PC-9 (cell line): ENCODE measurements at regions of chr1 and their contacts with region 1.

Region 1: DNA sequence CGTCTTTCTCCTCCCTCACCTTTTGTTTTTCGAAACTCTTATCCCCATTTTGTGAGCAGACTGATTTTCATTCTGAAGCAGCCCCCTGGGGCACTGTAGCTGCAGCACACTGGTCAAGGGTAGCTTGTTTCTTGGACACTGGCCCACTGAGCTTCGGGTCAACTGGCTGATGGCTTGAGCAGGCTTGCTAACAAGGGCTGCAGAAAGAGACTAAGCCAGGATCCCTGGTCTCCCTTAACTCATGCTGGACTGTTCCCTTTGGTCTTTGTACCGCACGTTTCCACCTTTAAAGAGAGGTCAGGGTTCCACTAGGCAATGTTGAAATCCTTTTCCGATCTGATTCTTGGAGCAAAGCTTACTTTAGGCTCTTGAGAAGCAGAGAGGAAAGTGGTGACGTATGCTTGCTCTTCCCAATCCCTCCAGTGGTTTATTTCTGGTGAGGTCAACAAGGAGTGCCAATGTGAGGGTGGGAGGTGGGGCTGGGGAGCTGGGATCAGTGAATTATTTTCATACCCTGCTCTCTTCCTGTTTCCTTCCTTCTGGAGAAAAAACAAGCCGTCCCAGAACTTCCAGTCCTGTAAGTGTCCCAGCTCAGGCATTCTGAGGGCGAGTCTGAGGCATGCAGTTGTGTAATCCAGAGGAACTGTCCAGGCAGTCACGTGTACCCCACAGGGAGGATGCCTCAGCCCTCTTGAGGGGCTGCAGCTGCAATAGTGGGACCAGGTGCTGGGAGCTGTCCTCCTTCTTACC is 7.6 kb downstream of the CYP4B1 start:
- DNase-seq: peak; percentile 69 to 82
- H3K4me3 ChIP-seq: no peak overlapping the region
- H3K27ac ChIP-seq: peak overlapping the region; percentile 73
- H3K4me1 ChIP-seq: peaks cover 51% of the 10 kb centered on the region
- H3K27me3 ChIP-seq: no peaks in the 10 kb centered on the region
- CTCF ChIP-seq: no peak

Region 2: GRCh38 chr1:46595127-46595526 is 211.3 kb before region 1 on chr1:
- CTCF ChIA-PET with region 1: no interaction called
- POLR2A ChIA-PET with region 1: no interaction called
- intact Hi-C with region 1: no loop called
- DNase-seq: no peak
- H3K4me3 ChIP-seq: no peak overlapping the region
- H3K27ac ChIP-seq: no peak overlapping the region
- H3K4me1 ChIP-seq: no peaks in the 10 kb centered on the region
- H3K27me3 ChIP-seq: no peaks in the 10 kb centered on the region
- CTCF ChIP-seq: no peak

Region 3: DNA sequence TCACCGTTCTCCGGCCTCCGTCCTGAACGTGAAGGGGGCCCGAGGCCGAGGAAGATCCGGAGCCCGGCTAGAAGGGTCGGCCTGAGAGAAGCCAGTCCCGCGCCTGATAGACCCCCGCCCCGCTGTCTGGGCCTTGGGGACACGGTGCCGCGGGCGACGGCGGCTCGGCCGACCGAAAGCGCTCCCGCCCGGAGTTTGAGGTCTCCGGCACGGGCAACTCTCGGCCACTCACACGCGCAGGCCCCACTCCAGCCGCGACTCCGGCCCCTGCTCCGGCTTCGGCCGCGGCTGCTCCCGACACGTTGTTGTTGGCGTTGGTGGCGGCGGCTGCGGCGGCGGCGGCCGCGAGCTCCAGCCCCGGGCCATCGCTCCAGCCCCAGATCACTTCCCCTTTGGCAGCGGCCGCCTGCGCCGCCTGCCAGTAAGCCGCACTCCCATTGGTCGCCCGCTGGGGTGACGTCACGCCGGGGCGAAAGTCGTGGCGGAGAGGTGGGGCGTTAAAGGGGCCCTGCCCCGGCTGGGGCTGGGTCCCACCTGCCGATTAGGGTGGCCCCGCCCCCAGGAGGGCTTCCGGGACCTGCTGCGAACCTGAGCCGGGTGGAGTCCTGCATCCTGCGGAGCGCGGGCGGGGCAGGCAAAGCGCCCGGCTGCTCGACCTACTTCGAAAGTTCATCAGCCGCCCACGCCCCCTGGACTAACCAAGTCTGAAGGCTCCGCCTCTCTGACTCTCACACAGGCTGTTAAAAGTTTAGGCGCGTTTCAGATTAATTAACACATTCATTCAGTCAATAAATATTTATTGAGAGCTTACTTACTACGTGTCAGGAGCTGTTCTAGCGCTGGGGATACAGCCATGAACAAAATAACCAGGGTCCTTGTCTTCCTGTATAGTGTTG is 87.5 kb before region 1 on chr1 and contains the start of gene EFCAB14:
- CTCF ChIA-PET with region 1: no interaction called
- POLR2A ChIA-PET with region 1: interaction called, 14 read pairs
- intact Hi-C with region 1: loop called (anchors 1 kb)
- DNase-seq: peak; percentile 91 to 100
- H3K4me3 ChIP-seq: peak within 1 kb of the TSS; percentile 82
- H3K27ac ChIP-seq: peak within 1 kb of the TSS; percentile 88
- H3K4me1 ChIP-seq: peaks cover 53% of the 10 kb centered on the region
- H3K27me3 ChIP-seq: no peaks in the 10 kb centered on the region
- CTCF ChIP-seq: no peak
- total RNA-seq, gene EFCAB14: 71.1 and 95.4 TPM in 2 replicates

Region 4: DNA sequence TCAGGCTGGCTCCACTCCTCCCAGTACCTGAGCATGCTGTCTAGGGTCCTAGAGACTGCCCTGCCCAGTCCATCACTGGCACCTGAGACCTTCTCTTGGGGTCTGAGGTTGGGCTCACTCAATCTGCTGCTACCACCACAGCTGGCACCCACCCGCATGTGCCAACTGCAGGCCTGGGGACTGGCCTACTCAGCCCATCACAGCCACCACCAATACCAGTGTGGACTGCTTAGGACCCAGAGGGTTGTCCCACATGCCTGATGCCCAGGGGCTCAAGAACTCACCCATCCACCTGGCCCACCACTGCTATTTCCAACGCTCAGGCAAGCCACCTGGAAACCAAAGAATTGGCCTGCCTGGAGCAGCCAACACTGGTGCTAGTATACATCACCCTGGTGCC is 55.9 kb after region 1 on chr1:
- CTCF ChIA-PET with region 1: no interaction called
- POLR2A ChIA-PET with region 1: no interaction called
- intact Hi-C with region 1: loop called (anchors 5 kb)
- DNase-seq: no peak
- H3K4me3 ChIP-seq: no peak overlapping the region
- H3K27ac ChIP-seq: no peak overlapping the region
- H3K4me1 ChIP-seq: peaks cover 5% of the 10 kb centered on the region
- H3K27me3 ChIP-seq: no peaks in the 10 kb centered on the region
- CTCF ChIP-seq: no peak

Region 5: DNA sequence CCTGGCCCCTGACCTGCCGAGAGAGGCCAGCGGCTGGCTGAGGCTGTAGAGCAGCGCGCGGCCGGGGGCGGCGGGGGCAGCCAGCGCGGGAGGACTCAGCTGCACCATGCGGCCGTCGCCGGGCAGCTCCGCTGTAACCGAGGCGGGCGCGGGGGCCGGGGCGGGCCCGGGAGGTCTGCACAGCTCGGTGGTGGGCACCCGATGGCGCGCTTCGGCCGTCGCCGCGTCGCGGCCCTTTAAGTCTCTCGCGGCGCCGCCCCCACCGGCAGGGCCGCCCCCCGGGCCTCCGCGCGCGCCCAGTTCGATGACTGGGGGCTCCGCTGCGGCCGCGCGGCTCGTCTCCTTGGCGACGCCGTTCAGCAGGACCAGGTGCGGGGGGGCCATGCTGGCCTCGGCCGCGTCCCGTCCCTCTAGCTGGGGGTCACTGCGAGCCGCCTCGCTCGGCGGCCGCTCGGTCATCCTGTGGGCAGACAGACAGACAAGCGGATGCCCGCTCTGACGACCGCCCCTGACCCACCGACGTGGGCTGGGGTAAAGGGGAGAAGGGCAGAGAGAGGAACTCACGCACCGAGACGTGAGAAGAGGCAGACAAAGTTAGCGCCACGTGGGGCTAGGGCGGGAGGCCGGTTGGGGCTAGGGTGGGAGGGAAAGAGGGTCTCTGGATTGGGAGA is 419.1 kb after region 1 on chr1:
- CTCF ChIA-PET with region 1: no interaction called
- POLR2A ChIA-PET with region 1: no interaction called
- intact Hi-C with region 1: no loop called
- DNase-seq: no peak
- H3K4me3 ChIP-seq: no peak overlapping the region
- H3K27ac ChIP-seq: no peak overlapping the region
- H3K4me1 ChIP-seq: no peaks in the 10 kb centered on the region
- H3K27me3 ChIP-seq: peaks cover 60% of the 10 kb centered on the region
- CTCF ChIP-seq: no peak